ENCODE measurements at regions of chr9 and their contacts with region 1.

Region 1: GRCh38 chr9:126611592-126612325 is 2.0 kb upstream of the LMX1B start:
- DNase-seq: peak; percentile 73 to 79
- ATAC-seq: peak; percentile 79 to 85 (median 80)
- H3K4me3 ChIP-seq: no peak overlapping the region
- H3K4me3 Mint-ChIP-seq: peak overlapping the region; percentile 54
- H3K27ac ChIP-seq: no peak overlapping the region
- H3K27ac Mint-ChIP-seq: peak overlapping the region in 1 of 2 donors; percentile 21
- H3K4me1 ChIP-seq: peaks cover 33% of the 10 kb centered on the region
- H3K4me1 Mint-ChIP-seq: peaks cover 7 to 24% of the 10 kb centered on the region in 2 donors
- H3K27me3 ChIP-seq: peaks cover 51% of the 10 kb centered on the region
- H3K27me3 Mint-ChIP-seq: peaks cover 34 to 52% of the 10 kb centered on the region in 2 donors
- CTCF ChIP-seq: peak; percentile 91

Region 2: DNA sequence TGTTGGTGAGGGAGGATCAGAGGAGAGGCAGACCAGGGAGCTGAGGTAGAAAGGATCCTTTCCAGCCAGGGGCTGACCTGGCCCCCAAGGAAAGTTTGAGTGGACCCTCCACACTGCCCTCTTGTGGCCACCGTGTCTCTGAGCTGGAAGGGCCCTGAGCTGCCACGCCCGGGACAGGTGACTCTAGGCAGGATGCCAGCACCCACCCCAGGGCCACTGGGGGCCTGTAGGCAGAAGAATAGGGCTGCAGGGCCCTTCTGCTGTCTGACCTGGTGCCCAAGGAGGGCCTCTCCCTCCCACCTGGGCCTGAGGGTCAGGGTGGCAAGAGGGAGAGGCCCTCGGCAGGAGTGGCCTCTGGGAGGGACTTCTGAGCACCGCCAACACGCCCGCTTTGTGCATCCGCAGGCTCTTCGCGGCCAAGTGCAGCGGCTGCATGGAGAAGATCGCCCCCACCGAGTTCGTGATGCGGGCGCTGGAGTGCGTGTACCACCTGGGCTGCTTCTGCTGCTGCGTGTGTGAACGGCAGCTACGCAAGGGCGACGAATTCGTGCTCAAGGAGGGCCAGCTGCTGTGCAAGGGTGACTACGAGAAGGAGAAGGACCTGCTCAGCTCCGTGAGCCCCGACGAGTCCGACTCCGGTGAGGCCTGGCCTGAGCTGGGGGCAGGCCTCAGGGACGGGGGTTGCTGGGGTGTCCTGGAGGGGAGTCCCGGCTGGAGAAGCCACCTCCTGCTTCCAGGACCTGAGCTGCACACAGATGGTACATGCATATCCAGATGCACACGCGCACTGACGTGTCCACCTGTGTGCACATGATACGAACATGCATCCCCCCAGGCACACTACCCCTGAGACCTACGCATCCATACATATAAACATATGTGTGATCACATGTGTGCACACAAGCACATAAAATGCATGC is 78.9 kb after region 1 on chr9:
- intact Hi-C with region 1: loop called (anchors 1 kb)
- DNase-seq: peak; percentile 58 to 71
- ATAC-seq: peak; percentile 52 to 83 (median 77)
- H3K4me3 ChIP-seq: no peak overlapping the region
- H3K4me3 Mint-ChIP-seq: no peak overlapping the region
- H3K27ac ChIP-seq: no peak overlapping the region
- H3K27ac Mint-ChIP-seq: no peak overlapping the region
- H3K4me1 ChIP-seq: no peaks in the 10 kb centered on the region
- H3K4me1 Mint-ChIP-seq: peaks cover 0 to 18% of the 10 kb centered on the region in 2 donors
- H3K27me3 ChIP-seq: peaks cover 10% of the 10 kb centered on the region
- H3K27me3 Mint-ChIP-seq: peaks cover 24 to 35% of the 10 kb centered on the region in 2 donors
- CTCF ChIP-seq: peak; percentile 70

Region 3: DNA sequence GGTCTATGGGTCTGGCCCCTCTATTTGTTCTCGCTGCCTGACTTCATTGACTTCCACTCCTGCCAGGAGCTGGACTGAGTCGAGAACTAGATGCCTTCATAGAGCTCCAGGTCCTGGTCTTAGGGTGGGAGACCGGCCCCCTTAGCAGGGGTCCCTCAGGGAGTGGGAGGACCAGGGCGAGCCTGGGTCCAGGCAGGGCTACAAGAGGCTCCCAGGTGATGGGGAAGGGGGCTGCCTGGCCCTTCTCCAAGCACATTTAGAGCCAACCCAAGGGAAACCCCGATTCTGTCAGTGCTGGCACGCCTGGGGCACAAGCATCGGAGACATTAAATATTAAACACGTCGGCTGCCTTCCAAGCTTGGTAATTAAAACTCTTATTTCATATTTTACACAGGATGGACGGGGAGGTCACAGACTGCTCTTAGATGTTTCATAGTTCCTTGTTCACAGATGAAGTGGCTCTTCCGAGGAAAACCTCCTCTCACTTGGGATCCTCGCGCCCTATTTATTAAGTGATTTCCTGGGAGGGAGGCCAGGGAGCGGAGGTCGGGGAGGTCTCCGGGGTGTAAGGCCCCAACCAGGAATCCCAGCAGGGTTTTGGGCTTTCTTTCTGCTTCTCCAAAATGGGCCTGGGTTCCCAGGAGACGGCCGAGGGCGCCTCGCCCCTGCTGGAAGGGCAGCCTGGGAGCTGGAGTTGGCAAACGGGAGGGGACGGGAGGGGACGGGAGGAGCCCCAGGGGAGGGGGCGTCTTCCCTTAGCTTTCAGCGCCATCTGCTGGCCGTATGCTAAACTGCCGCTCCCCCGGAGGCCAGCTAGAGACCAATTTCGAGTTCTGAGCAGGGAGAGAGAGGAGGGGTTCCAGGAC is 169.7 kb after region 1 on chr9:
- intact Hi-C with region 1: loop called (anchors 1 kb)
- DNase-seq: peak; percentile 84 to 88
- ATAC-seq: peak; percentile 81 to 99 (median 98)
- H3K4me3 ChIP-seq: no peak overlapping the region
- H3K4me3 Mint-ChIP-seq: no peak overlapping the region
- H3K27ac ChIP-seq: no peak overlapping the region
- H3K27ac Mint-ChIP-seq: no peak overlapping the region
- H3K4me1 ChIP-seq: peaks cover 6% of the 10 kb centered on the region
- H3K4me1 Mint-ChIP-seq: no peaks in the 10 kb centered on the region
- H3K27me3 ChIP-seq: peaks cover 3% of the 10 kb centered on the region
- H3K27me3 Mint-ChIP-seq: peaks cover 11 to 13% of the 10 kb centered on the region in 2 donors
- CTCF ChIP-seq: peak; percentile 96